PC-3 (cell line): ENCODE measurements at regions of chr11 and their contacts with region 1.

Region 1: GRCh38 chr11:120432056-120433018 is 79.2 kb upstream of the GRIK4 start:
- DNase-seq: peak; percentile 100
- ATAC-seq: peak; percentile 94
- H3K4me3 ChIP-seq: peak overlapping the region; percentile 39
- H3K27ac ChIP-seq: peak overlapping the region; percentile 74
- H3K4me1 ChIP-seq: peaks cover 18% of the 10 kb centered on the region
- H3K27me3 ChIP-seq: no peaks in the 10 kb centered on the region
- CTCF ChIP-seq: no peak

Region 2: DNA sequence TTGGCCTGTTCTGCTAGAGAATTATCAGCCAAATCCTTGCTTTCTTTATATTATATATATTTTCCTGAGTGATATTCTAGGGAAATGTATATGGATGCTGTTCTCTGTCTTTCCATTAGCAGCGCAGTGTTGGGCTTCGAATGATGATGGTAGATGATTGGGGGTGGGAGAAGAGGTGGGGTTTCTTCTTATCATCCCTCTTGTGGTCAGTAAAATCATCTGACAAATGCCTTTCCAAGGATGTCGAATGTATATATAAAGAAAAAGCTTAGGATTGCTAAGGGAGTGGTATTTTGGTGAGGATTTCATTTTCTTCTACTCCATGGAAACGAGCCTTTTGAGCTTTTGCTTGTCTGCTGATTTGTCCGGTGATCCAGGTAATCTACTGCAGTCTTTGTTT is 47.2 kb before region 1 on chr11:
- CTCF ChIA-PET with region 1: no interaction called
- POLR2A ChIA-PET with region 1: no interaction called
- intact Hi-C with region 1: loop called (anchors 5 kb)
- DNase-seq: no peak
- ATAC-seq: no peak
- H3K4me3 ChIP-seq: no peak overlapping the region
- H3K27ac ChIP-seq: no peak overlapping the region
- H3K4me1 ChIP-seq: peaks cover 40% of the 10 kb centered on the region
- H3K27me3 ChIP-seq: no peaks in the 10 kb centered on the region
- CTCF ChIP-seq: no peak

Region 3: DNA sequence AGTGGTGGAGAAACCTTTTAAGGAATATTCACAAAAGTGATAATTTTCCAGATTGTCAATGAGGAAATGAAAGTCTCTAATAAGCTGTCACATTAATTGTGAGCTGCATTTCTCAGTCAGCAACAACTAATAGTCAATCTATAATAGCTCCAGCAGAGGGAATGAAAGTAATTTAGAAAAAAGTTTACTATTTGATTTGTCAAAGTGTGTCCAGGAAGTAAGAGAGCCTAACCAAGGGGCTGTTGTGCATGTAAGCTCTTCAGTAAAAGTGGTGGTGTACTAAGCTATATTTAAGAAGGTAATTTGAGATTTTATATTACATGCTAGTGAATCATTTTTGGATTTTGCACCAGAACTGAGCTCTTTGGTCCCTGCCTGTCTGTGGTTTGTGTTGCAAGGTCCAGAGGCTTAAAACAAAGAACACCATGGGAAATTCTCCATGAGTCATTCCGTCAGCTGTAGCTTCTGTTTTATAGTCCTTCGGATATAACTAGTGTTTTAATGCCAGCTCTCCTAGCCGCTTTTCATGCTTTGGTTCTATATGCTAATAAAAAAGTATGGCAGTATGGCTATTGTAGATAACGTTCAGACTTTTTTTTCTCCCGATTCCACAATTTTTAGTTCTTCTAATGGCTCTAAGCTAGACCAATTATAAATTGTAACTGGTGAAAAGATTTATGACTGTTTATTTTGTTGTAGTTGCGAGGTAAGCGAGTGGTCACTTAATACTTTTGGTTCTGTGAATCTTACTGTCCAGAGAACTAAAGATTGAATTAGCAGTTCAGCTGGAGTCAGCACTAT is 31.6 kb before region 1 on chr11:
- CTCF ChIA-PET with region 1: interaction called, 4 read pairs
- POLR2A ChIA-PET with region 1: interaction called, 4 read pairs
- intact Hi-C with region 1: loop called (anchors 1 kb)
- DNase-seq: peak; percentile 97
- ATAC-seq: peak; percentile 94
- H3K4me3 ChIP-seq: peak overlapping the region; percentile 59
- H3K27ac ChIP-seq: peak overlapping the region; percentile 61
- H3K4me1 ChIP-seq: peaks cover 32% of the 10 kb centered on the region
- H3K27me3 ChIP-seq: no peaks in the 10 kb centered on the region
- CTCF ChIP-seq: no peak

Region 4: DNA sequence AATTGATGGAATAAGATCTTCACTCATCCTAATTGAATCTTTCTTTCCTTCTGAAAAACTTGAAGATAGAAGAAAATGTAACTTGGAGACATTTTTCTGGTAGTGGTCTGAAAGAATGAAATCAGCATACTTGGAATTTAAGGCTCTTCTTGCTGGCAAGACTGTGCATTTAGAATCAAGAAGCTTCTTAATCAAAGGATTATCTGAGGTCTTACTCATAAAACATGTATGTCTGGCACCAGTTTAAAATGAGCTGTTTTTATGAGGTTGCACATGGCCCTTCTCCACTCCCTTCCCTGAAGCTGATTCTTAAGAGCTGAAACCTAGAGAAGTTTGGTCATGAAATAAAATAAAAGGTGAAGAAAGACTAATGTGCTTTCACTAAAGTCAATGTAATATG is 18.9 kb before region 1 on chr11:
- CTCF ChIA-PET with region 1: no interaction called
- POLR2A ChIA-PET with region 1: no interaction called
- intact Hi-C with region 1: loop called (anchors 1 kb)
- DNase-seq: peak; percentile 79
- ATAC-seq: peak; percentile 88
- H3K4me3 ChIP-seq: no peak overlapping the region
- H3K27ac ChIP-seq: no peak overlapping the region
- H3K4me1 ChIP-seq: peaks cover 13% of the 10 kb centered on the region
- H3K27me3 ChIP-seq: no peaks in the 10 kb centered on the region
- CTCF ChIP-seq: no peak

Region 5: GRCh38 chr11:120539667-120540369 is 107.5 kb after region 1 on chr11:
- CTCF ChIA-PET with region 1: no interaction called
- POLR2A ChIA-PET with region 1: no interaction called
- intact Hi-C with region 1: no loop called
- DNase-seq: peak; percentile 95
- ATAC-seq: peak; percentile 24; the same call in 1 of the 2 replicates
- H3K4me3 ChIP-seq: no peak overlapping the region
- H3K27ac ChIP-seq: no peak overlapping the region
- H3K4me1 ChIP-seq: peaks cover 5% of the 10 kb centered on the region; the same call in 1 of the 2 replicates
- H3K27me3 ChIP-seq: peaks cover 2% of the 10 kb centered on the region; the same call in 1 of the 2 replicates
- CTCF ChIP-seq: no peak

Region 6: DNA sequence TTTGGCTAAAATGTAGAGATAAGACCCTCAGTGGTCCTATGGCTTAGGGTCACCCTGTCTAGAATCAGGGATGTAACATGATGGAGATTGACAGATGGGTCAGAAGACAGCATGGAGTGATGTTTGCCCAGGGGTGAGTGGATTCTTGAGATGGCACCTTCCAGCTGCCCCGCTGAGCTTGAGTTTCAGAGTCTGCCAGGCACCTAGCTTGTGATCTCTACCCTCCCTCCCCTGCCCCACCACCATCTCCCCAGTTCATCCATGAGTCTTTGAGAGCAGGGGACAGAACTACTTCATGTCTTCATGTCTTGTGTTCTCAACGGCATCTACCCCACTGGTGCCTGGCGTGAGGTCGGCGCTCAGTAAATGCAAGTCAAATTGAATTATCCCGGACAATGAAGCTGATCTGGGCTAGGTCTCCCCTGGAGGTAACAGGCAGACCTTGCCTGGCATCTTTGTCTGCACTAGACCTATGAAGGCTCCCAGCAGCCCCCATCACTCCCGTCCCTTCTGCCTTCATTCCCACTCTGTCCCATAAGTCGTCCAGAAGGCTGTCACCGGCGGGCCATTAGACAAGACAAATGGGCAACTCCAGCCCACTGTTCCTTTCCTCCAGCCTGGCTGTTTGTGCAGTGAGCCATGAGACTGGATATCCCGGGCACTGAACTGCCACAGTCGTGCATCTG is 352.4 kb after region 1 on chr11:
- CTCF ChIA-PET with region 1: no interaction called
- POLR2A ChIA-PET with region 1: no interaction called
- intact Hi-C with region 1: no loop called
- DNase-seq: no peak
- ATAC-seq: no peak
- H3K4me3 ChIP-seq: no peak overlapping the region
- H3K27ac ChIP-seq: no peak overlapping the region
- H3K4me1 ChIP-seq: peaks cover 12% of the 10 kb centered on the region; the same call in 1 of the 2 replicates
- H3K27me3 ChIP-seq: peaks cover 59% of the 10 kb centered on the region
- CTCF ChIP-seq: no peak